ENCODE measurements at regions of chr2 and their contacts with region 1.

Region 1: DNA sequence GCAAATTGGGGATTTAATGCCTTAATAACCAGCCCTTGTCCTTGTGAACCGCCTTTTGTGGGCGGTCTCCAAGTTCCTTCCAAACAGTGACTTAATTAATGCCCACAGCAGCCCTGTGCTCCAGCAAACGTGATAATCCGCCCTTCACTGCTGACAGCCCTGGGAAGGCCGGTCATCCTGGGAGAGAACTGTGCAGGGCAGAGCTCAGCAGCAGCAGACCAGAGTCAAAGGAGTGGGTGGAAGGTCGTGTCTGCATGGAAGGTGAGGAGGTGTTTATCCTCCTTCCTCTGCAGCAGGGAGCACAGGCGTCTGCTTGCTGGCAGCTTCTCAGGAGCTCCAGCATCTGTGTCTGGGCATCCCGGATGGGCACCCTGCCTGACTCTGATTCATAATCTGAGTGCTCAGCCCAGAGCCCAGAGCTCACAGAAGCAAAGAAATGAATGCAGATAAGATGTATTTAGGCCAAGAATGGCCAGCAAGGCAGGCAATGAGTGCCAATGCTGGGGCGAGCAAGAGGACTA is 270.0 kb upstream of the PXDN start:
- DNase-seq: peak; percentile 23 to 38
- ATAC-seq: peak; percentile 32 to 91 (median 74)
- H3K4me3 ChIP-seq: no peak overlapping the region
- H3K27ac ChIP-seq: peak overlapping the region in 4 of 10 donors; percentile 19 to 61 (median 28)
- H3K4me1 ChIP-seq: peaks cover 5 to 47% (median 22%) of the 10 kb centered on the region in 9 donors
- H3K27me3 ChIP-seq: peaks cover 0 to 4% (median 0%) of the 10 kb centered on the region in 7 donors
- CTCF ChIP-seq: no peak

Region 2: GRCh38 chr2:1910592-1911246 is 103.6 kb before region 1 on chr2:
- intact Hi-C with region 1: no loop called
- DNase-seq: no peak
- ATAC-seq: peak in 5 of 8 donors; percentile 44 to 56 (median 49)
- H3K4me3 ChIP-seq: no peak overlapping the region
- H3K27ac ChIP-seq: no peak overlapping the region
- H3K4me1 ChIP-seq: peaks cover 0 to 6% (median 0%) of the 10 kb centered on the region in 9 donors
- H3K27me3 ChIP-seq: peaks cover 0 to 14% (median 0%) of the 10 kb centered on the region in 7 donors
- CTCF ChIP-seq: peak; percentile 9 to 69 (median 46)

Region 3: GRCh38 chr2:1990724-1991123 is 23.6 kb before region 1 on chr2:
- intact Hi-C with region 1: no loop called
- DNase-seq: peak; percentile 33 to 62
- ATAC-seq: peak; percentile 74 to 96 (median 90)
- H3K4me3 ChIP-seq: no peak overlapping the region
- H3K27ac ChIP-seq: no peak overlapping the region
- H3K4me1 ChIP-seq: peaks cover 0 to 13% (median 0%) of the 10 kb centered on the region in 9 donors
- H3K27me3 ChIP-seq: peaks cover 0 to 8% (median 0%) of the 10 kb centered on the region in 7 donors
- CTCF ChIP-seq: no peak

Region 4: DNA sequence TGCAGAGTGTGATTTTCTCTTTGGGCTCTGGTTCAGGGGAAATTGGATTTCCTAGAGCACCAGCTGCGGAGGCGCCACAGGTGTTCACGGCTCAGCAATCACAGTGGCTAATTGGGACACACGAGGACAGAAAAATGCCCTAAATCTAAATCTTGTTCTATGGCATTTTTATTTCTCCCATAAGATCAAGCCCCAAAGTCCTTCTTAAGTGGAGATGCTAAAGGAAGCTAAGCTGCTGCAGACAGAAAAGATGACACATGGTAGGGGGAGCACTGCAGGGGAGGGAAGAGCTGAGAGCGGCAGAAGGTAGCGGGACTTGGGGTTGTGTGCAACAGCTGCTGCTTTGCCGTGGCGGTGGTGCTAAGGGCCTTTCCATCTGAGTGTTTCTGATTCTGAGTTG is 36.1 kb after region 1 on chr2:
- intact Hi-C with region 1: loop called in 1 of 10 experiments (anchors 5 kb)
- DNase-seq: no peak
- ATAC-seq: no peak
- H3K4me3 ChIP-seq: no peak overlapping the region
- H3K27ac ChIP-seq: no peak overlapping the region
- H3K4me1 ChIP-seq: peaks cover 0 to 1% (median 0%) of the 10 kb centered on the region in 9 donors
- H3K27me3 ChIP-seq: no peaks in the 10 kb centered on the region
- CTCF ChIP-seq: no peak

Region 5: DNA sequence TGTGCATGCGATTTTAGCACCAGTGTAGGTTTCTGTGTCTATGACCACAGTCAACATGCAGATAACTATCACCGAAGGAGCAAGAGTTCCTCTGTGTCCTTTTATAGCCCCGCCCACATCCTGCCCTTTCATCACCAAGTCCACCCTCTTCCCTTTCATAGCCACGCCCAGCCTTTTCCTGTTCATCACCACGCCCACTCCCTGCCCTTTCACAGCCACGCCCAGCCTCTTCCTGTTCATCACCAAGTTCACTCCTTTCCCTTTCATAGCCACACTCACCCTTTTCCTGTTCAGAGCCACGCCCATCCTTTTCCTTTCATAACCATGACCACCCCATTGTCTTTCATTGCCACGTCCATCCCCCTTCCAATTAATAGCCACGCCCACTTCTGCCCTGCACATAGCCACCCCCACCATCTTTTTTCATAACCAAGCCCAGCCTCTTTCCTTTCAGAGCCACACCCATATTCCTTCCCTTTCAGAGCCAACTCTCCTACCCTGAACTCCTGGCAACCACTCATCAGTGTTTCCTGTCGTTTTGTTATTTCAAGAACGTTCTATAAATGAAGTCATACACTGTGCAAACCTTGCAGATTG is 42.9 kb after region 1 on chr2:
- intact Hi-C with region 1: loop called in 3 of 10 experiments (anchors 1 to 5 kb)
- DNase-seq: peak; percentile 65 to 95
- ATAC-seq: peak; percentile 94 to 97 (median 96)
- H3K4me3 ChIP-seq: peak overlapping the region in 2 of 10 donors; percentile 7 to 28
- H3K27ac ChIP-seq: peak overlapping the region; percentile 38 to 85 (median 78)
- H3K4me1 ChIP-seq: peaks cover 0 to 31% (median 12%) of the 10 kb centered on the region in 9 donors
- H3K27me3 ChIP-seq: no peaks in the 10 kb centered on the region
- CTCF ChIP-seq: no peak

Region 6: GRCh38 chr2:2229626-2230432 is 215.5 kb after region 1 on chr2:
- intact Hi-C with region 1: no loop called
- DNase-seq: no peak
- ATAC-seq: no peak
- H3K4me3 ChIP-seq: no peak overlapping the region
- H3K27ac ChIP-seq: no peak overlapping the region
- H3K4me1 ChIP-seq: peaks cover 0 to 7% (median 0%) of the 10 kb centered on the region in 9 donors
- H3K27me3 ChIP-seq: peaks cover 0 to 10% (median 0%) of the 10 kb centered on the region in 7 donors
- CTCF ChIP-seq: peak in 3 of 9 donors; percentile 6 to 21 (median 10)